CD4-positive, alpha-beta memory T cell (primary cell): ENCODE measurements at regions of chr9 and their contacts with region 1.

Region 1: GRCh38 chr9:100352727-100353505 is at the start of gene TEX10:
- DNase-seq: peak; percentile 84 to 86 (median 85)
- H3K4me3 ChIP-seq: peak within 1 kb of the TSS; percentile 78 to 85
- H3K4me3 Mint-ChIP-seq: peak within 1 kb of the TSS; percentile 77 to 97 (median 96)
- H3K27ac ChIP-seq: peak within 1 kb of the TSS; percentile 78
- H3K27ac Mint-ChIP-seq: peak within 1 kb of the TSS; percentile 34 to 94 (median 89)
- H3K4me1 ChIP-seq: peaks cover 38% of the 10 kb centered on the region
- H3K4me1 Mint-ChIP-seq: peaks cover 35 to 56% (median 43%) of the 10 kb centered on the region in 4 donors
- H3K27me3 ChIP-seq: no peaks in the 10 kb centered on the region
- H3K27me3 Mint-ChIP-seq: no peaks in the 10 kb centered on the region
- total RNA-seq, gene TEX10: 22.4 to 22.8 TPM

Region 2: GRCh38 chr9:99221621-99222415 is 1131.1 kb before region 1 on chr9 and contains the starts of genes ALG2 and SEC61B:
- CTCF ChIA-PET with region 1: no interaction called
- POLR2A ChIA-PET with region 1: no interaction called
- intact Hi-C with region 1: loop called (anchors 1 kb)
- DNase-seq: peak; percentile 92 to 95 (median 93)
- H3K4me3 ChIP-seq: peak within 1 kb of the TSS; percentile 57 to 78
- H3K4me3 Mint-ChIP-seq: peak within 1 kb of the TSS; percentile 95 to 100 (median 98)
- H3K27ac ChIP-seq: peak within 1 kb of the TSS; percentile 82
- H3K27ac Mint-ChIP-seq: peak within 1 kb of the TSS; percentile 99 to 100 (median 100)
- H3K4me1 ChIP-seq: peaks cover 54% of the 10 kb centered on the region
- H3K4me1 Mint-ChIP-seq: peaks cover 51 to 93% (median 74%) of the 10 kb centered on the region in 4 donors
- H3K27me3 ChIP-seq: no peaks in the 10 kb centered on the region
- H3K27me3 Mint-ChIP-seq: no peaks in the 10 kb centered on the region
- total RNA-seq, gene ALG2: 39.1 to 39.8 TPM
- total RNA-seq, gene SEC61B: 101 to 106 TPM

Region 3: GRCh38 chr9:100322954-100323536 is 29.9 kb before region 1 on chr9:
- CTCF ChIA-PET with region 1: interaction called, 46 read pairs
- POLR2A ChIA-PET with region 1: interaction called, 7 read pairs
- intact Hi-C with region 1: no loop called
- DNase-seq: peak in 4 of 5 donors; percentile 8 to 26 (median 11)
- H3K4me3 ChIP-seq: no peak overlapping the region
- H3K4me3 Mint-ChIP-seq: no peak overlapping the region
- H3K27ac ChIP-seq: no peak overlapping the region
- H3K27ac Mint-ChIP-seq: peak overlapping the region in 3 of 7 donors; percentile 18 to 31 (median 19)
- H3K4me1 ChIP-seq: peaks cover 3% of the 10 kb centered on the region
- H3K4me1 Mint-ChIP-seq: peaks cover 12 to 13% (median 13%) of the 10 kb centered on the region in 4 donors
- H3K27me3 ChIP-seq: no peaks in the 10 kb centered on the region
- H3K27me3 Mint-ChIP-seq: no peaks in the 10 kb centered on the region

Region 4: GRCh38 chr9:100426530-100427428 is 73.9 kb after region 1 on chr9 and contains the start of gene MSANTD3:
- CTCF ChIA-PET with region 1: interaction called, 6 read pairs
- POLR2A ChIA-PET with region 1: interaction called, 14 read pairs
- intact Hi-C with region 1: loop called (anchors 1 kb)
- DNase-seq: peak; percentile 39 to 57 (median 48)
- H3K4me3 ChIP-seq: peak within 1 kb of the TSS; percentile 64 to 72
- H3K4me3 Mint-ChIP-seq: peak within 1 kb of the TSS; percentile 94 to 99 (median 96)
- H3K27ac ChIP-seq: peak within 1 kb of the TSS; percentile 40
- H3K27ac Mint-ChIP-seq: peak within 1 kb of the TSS; percentile 92 to 97 (median 95)
- H3K4me1 ChIP-seq: peaks cover 26% of the 10 kb centered on the region
- H3K4me1 Mint-ChIP-seq: peaks cover 27 to 50% (median 35%) of the 10 kb centered on the region in 4 donors
- H3K27me3 ChIP-seq: no peaks in the 10 kb centered on the region
- H3K27me3 Mint-ChIP-seq: peaks cover 1% of the 10 kb centered on the region in 2 donors
- total RNA-seq, gene MSANTD3: 14.4 to 14.8 TPM

Region 5: GRCh38 chr9:100598641-100599145 is 245.8 kb after region 1 on chr9:
- CTCF ChIA-PET with region 1: interaction called, 3 read pairs
- POLR2A ChIA-PET with region 1: no interaction called
- intact Hi-C with region 1: loop called (anchors 10 kb)
- DNase-seq: peak; percentile 77 to 83 (median 81)
- H3K4me3 ChIP-seq: peak overlapping the region in 1 of 2 donors; percentile 59
- H3K4me3 Mint-ChIP-seq: peak overlapping the region; percentile 72 to 88 (median 86)
- H3K27ac ChIP-seq: peak overlapping the region; percentile 49
- H3K27ac Mint-ChIP-seq: peak overlapping the region; percentile 16 to 93 (median 58)
- H3K4me1 ChIP-seq: peaks cover 15% of the 10 kb centered on the region
- H3K4me1 Mint-ChIP-seq: peaks cover 14 to 34% (median 27%) of the 10 kb centered on the region in 4 donors
- H3K27me3 ChIP-seq: no peaks in the 10 kb centered on the region
- H3K27me3 Mint-ChIP-seq: peaks cover 0 to 3% of the 10 kb centered on the region in 2 donors

Region 6: DNA sequence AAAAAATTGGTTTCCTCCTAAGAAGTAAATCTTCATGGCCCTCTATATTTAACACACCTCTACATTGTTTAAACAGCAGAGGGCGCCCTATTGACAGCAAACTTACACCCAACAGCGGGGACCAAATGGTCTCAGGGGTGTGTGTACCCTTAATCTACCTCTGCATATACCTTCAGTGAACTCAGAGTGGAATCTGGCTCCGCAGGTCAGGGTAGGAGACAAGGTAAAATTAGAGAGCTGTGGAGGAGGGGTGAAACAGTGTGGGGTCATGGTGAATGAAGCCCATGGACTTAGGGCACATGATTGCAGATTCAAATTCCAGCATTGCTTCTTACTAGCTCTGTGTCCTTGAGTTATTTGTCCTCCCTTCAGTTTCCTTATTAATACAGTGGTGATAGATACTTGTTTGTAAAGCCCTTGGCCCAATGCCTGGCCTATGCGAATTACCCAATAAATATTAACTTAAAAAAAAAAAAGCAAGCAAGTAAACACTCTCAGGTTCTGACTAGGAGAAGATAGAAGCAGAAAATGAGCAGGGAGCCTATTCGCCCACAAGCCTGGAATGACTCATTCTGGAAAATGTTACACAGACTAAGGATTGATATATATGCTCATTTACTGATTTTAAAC is 347.9 kb after region 1 on chr9:
- CTCF ChIA-PET with region 1: no interaction called
- POLR2A ChIA-PET with region 1: no interaction called
- intact Hi-C with region 1: no loop called
- DNase-seq: peak in 1 of 5 donors; percentile 1
- H3K4me3 ChIP-seq: no peak overlapping the region
- H3K4me3 Mint-ChIP-seq: no peak overlapping the region
- H3K27ac ChIP-seq: no peak overlapping the region
- H3K27ac Mint-ChIP-seq: no peak overlapping the region
- H3K4me1 ChIP-seq: no peaks in the 10 kb centered on the region
- H3K4me1 Mint-ChIP-seq: no peaks in the 10 kb centered on the region
- H3K27me3 ChIP-seq: no peaks in the 10 kb centered on the region
- H3K27me3 Mint-ChIP-seq: no peaks in the 10 kb centered on the region

Region 7: DNA sequence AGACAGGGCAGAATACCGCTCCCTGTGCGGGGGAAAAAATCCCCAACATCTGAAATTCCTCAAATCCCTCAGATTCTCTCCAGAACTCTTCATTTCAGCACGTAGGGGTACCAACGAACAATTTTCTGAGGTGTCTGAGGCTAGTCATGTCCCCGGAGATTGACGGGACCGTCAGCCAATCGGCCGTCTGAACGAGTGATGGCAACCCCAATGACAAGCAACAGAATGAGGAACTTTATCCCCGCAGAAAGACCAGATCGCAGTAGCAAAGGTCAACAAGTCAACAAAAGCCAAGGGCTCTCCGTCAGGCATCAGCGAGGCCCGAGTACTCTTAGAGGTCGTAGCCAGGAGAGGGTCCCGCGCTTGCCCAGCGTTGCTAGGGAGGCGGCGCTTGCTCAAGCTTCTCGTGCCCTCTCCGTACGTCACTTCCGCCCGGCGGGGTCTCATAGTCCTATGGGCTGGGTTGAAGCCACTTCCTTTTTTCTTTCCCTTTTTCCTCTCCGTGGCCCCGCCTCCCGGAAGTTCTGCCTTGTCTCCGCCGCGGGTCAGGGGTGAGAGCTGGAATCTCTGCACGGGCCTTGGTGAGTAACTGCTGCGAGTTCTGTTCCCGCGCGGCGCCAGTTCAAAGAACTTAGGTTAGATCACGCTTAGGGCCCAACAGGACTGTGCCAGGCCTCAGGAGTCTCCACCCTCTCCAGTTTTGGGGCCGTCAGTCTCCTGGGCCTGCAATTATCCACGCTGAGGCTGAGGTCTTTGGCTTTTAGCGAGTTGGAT is 1180.6 kb after region 1 on chr9 and contains the start of gene RNF20:
- CTCF ChIA-PET with region 1: no interaction called
- POLR2A ChIA-PET with region 1: no interaction called
- intact Hi-C with region 1: loop called (anchors 5 kb)
- DNase-seq: peak; percentile 99 to 100 (median 99)
- H3K4me3 ChIP-seq: peak within 1 kb of the TSS; percentile 73 to 79
- H3K4me3 Mint-ChIP-seq: peak within 1 kb of the TSS; percentile 89 to 98 (median 92)
- H3K27ac ChIP-seq: peak within 1 kb of the TSS; percentile 98
- H3K27ac Mint-ChIP-seq: peak within 1 kb of the TSS; percentile 97 to 100 (median 99)
- H3K4me1 ChIP-seq: peaks cover 49% of the 10 kb centered on the region
- H3K4me1 Mint-ChIP-seq: peaks cover 11 to 33% (median 18%) of the 10 kb centered on the region in 4 donors
- H3K27me3 ChIP-seq: no peaks in the 10 kb centered on the region
- H3K27me3 Mint-ChIP-seq: peaks cover 0 to 3% of the 10 kb centered on the region in 2 donors
- total RNA-seq, gene RNF20: 64.5 to 67.4 TPM